ENCODE measurements at regions of chr12 and their contacts with region 1.

Region 1: GRCh38 chr12:52372216-52373154 is 5.2 kb upstream of the KRT85 start:
- DNase-seq: peak; percentile 73
- ATAC-seq: peak; percentile 58
- H3K4me3 Mint-ChIP-seq: no peak overlapping the region
- H3K27ac Mint-ChIP-seq: no peak overlapping the region
- H3K4me1 Mint-ChIP-seq: no peaks in the 10 kb centered on the region
- H3K27me3 Mint-ChIP-seq: peaks cover 36% of the 10 kb centered on the region

Region 2: DNA sequence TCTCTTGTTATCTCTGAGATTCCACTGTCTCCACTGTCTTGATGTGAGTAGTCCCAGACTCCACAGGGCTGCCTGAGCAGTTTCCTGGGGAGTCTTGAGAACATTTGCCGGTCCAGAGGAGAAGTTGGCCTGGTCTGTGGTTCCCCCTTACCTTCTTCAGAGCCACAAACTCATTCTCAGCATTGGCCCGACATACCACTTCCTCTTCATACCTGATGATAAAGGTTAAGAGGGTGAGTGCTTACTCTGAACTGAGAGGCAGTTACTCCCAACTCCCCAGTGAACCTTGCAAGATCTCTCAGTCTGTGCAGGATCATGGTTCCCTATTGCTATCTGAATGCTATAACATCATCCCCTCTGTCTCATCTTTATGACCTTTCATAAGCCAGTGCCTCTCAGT is 10.4 kb after region 1 on chr12:
- CTCF ChIA-PET with region 1: interaction called, 18 read pairs
- DNase-seq: no peak
- ATAC-seq: peak; percentile 53
- H3K4me3 Mint-ChIP-seq: no peak overlapping the region
- H3K27ac Mint-ChIP-seq: no peak overlapping the region
- H3K4me1 Mint-ChIP-seq: peaks cover 20% of the 10 kb centered on the region
- H3K27me3 Mint-ChIP-seq: peaks cover 2% of the 10 kb centered on the region

Region 3: DNA sequence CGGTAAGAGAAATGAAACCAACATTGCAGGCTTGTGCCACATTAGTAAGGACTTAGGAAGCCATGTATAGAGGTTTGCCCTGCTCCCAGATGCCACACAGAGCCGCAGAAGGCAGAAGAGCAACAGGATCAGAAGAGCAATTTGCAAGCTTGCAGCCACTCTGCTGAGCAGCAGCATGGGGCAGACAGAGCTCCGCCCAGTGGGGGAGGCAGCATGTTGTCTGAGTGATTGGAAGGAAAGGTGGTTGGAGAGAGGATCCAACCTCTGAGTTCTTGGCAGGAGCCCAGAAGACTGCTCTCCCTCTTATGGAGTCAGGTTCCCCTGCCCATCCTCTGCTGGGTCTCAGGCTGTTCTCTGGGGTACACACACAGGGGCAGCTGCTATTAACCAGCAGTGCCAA is 122.9 kb after region 1 on chr12:
- CTCF ChIA-PET with region 1: no interaction called
- DNase-seq: no peak
- ATAC-seq: no peak
- H3K4me3 Mint-ChIP-seq: no peak overlapping the region
- H3K27ac Mint-ChIP-seq: no peak overlapping the region
- H3K4me1 Mint-ChIP-seq: no peaks in the 10 kb centered on the region
- H3K27me3 Mint-ChIP-seq: peaks cover 48% of the 10 kb centered on the region

Region 4: DNA sequence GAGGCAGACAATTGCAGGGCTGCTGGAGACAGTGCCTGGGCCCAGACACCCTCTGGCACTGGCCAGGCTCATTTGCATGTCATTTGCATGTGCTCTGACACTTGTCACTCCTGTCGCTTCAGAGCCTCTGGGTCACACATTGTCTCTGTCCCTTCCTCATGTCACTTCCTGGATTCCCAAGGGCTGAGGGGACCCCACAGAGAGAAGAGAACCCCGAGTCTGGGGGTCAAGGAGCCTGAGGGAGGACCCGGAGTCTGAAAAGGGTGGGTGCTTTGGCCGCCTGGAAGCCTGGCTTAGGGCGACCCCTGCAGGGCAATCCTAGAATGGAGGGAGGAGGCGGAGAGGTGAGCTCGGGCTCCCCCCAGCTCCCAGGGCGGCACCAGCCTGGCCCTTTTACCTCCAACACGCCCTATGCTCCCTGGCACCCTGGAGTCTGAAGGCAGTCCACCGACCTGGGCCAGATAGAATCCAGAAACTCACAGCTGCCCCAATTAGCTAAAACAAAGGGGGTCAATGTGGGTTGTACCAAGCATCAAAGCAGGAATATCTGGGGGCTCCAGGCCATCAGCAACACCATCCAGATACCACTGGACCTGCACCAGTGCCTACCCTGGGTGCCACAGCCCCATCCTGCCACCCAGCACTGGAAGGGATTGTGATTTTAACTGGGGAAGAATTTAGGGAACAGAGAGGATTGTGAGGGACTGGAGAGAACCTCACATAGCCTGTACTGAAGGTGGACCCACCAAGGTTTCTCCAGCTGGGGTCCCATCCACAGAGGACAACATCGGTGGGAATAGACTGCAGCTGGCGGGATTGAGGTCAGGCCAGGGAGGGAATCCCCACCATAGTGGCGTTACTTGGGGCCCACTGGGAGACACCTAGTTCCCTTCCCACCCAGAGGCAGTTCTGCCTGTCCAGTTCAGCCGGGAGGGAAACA is 498.1 kb after region 1 on chr12:
- CTCF ChIA-PET with region 1: interaction called, 14 read pairs
- DNase-seq: peak; percentile 83
- ATAC-seq: peak; percentile 53
- H3K4me3 Mint-ChIP-seq: no peak overlapping the region
- H3K27ac Mint-ChIP-seq: no peak overlapping the region
- H3K4me1 Mint-ChIP-seq: peaks cover 13% of the 10 kb centered on the region
- H3K27me3 Mint-ChIP-seq: peaks cover 6% of the 10 kb centered on the region

Measured in activated CD8-positive, alpha-beta memory T cell treated with anti-CD3 and anti-CD28 coated beads, Interleukin-2, amount 10 ng/mL, durations not matched to agents 7 days and 5 days (primary cell).